ENCODE measurements at regions of chr7 and their contacts with region 1.

Region 1: GRCh38 chr7:106461993-106462859 is 177.4 kb upstream of the NAMPT start:
- ATAC-seq: peak in 6 of 8 experiments; percentile 18 to 53 (median 38)
- H3K4me3 ChIP-seq: no peak overlapping the region
- H3K27ac ChIP-seq: no peak overlapping the region
- H3K4me1 ChIP-seq: peaks cover 0 to 3% of the 10 kb centered on the region in 2 donors

Region 2: DNA sequence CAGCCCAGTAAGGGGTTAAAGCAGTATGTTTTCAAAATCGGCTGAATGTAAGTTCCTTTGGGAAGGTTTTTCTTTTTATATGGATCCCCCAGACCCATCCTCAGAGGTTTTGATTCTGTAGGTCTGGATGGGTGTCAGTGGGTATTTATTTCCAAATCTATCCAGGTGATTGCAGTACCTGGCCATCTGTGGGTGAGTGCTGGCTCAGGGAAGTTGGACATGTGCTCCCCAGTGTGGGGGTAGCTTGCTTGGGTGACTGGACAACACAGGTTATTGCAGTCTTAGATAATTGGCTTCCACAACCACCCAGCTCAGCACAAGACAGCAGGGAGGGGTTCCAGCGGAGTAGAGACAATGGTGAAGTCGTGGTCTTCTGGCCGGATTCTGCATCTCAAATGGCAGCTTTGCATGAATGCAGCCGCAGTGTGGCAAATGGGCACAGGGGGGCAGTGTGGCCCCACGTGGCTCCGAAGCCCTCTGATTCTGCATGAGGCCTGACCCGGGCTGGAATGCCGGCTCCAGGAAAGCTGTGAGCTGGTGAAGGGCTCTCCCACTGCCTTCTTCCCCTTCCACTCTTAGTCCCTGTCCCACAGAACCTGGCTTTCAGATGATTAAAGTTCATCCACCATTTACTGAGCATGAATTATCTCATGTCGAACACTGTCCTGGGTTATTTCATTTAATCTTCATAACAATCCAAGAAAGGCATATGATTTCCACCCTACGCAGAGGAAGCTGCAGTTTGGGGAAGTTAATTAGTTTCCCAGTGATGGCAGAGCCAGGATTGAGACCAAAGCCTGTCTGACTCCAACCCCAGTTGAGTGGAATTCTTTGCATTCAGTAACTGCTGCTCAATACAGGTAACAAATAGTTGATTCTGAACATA is 285.6 kb before region 1 on chr7:
- in situ Hi-C with region 1: loop called in 8 of 9 experiments (anchors 10 to 25 kb)
- ATAC-seq: peak; percentile 63 to 99 (median 94)
- H3K4me3 ChIP-seq: no peak overlapping the region
- H3K27ac ChIP-seq: no peak overlapping the region
- H3K4me1 ChIP-seq: peaks cover 0 to 4% of the 10 kb centered on the region in 2 donors

Region 3: DNA sequence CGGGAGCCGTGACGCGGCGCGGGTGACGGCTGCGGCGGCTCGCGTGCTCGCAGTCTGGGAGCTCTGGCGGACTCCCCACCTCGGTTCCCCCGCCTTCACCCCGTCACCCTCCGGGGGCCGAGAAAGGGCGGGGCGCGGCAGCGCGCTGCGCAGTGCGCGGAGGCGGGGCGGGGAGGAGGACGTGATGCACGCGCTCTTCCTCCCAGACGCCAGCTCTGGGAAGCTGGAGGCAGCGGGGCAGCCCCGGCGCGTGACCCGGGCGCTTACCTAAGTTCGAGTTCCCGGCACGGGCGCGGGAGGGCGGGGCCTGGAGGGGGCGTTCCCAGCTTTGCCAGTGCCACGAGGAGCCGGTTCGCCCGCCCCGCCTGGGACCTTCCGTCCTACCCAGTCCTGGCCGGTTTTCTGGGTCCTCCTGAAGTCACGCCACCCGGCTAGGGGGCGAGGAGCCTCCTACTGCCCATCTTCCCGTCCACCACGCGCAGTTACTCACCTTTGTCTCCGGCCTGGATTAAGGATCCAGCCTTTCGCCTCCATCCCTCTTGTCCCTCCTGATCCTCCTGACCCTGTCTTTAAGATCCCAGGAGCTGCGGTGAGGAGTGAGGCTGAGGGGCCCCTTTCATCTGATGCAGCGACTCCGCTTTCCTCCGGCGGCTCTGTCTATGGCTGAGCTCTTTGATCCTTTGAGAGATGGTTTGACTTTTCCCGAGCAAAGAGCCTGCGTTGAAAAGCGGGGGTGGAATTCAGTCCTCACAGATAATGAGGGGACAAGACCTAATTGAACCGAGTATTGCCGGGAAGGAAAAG is 177.0 kb before region 1 on chr7:
- in situ Hi-C with region 1: loop called in 1 of 9 experiments (anchors 25 kb)
- ATAC-seq: peak; percentile 65 to 88 (median 85)
- H3K4me3 ChIP-seq: peak overlapping the region; percentile 47 to 65 (median 50)
- H3K27ac ChIP-seq: peak overlapping the region; percentile 91 to 92
- H3K4me1 ChIP-seq: peaks cover 11 to 16% of the 10 kb centered on the region in 2 donors